ENCODE measurements at regions of chr17 and their contacts with region 1.

Region 1: DNA sequence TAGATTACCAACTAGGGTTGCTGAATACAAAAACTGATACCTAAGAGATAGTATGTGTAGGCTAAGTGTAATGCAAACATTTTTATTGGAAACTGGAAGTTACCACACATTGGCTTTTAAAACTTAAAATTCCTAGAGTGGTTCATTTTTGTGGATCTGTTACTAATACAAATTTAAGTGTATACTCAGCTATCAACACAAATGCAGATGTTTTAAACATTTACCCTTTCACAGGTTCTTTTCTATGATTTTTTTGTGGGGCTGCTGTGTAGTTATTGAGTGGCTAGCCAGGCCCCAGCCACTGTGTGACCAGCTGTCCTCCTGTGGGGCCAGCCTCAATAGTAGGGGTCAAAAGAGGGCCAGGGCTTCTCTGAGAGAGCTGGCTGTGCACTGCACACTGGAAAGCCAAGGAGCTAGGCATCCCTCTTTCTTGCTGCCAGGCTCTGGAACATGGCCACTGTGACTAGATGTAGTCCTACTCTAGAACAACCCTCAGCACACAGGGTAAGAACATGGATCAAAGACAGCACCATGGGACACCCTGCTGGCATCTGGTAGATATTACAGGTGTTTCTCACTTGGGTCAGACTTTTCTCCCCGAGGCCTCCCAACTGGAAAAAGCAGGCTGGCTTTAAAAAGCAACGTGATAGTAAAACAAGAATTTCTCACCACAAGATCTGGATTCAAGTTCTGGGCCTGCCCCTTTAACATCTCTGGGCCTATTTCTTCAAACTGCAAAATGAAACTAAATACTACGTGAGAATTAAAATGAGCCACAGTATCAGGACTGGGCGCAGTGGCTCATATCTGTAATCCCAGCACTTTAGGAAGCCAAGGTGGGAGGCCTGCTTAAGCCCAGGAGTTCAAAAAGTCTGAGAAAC is 7.3 kb upstream of the VEZF1 start:
- DNase-seq: peak; percentile 56 to 65 (median 59)
- H3K4me3 ChIP-seq: no peak overlapping the region
- H3K4me3 Mint-ChIP-seq: peak overlapping the region in 4 of 8 donors; percentile 2 to 74 (median 33)
- H3K27ac ChIP-seq: peak overlapping the region; percentile 29
- H3K27ac Mint-ChIP-seq: peak overlapping the region; percentile 59 to 88 (median 76)
- H3K4me1 ChIP-seq: peaks cover 28% of the 10 kb centered on the region
- H3K4me1 Mint-ChIP-seq: peaks cover 22 to 47% (median 36%) of the 10 kb centered on the region in 4 donors
- H3K27me3 ChIP-seq: no peaks in the 10 kb centered on the region
- H3K27me3 Mint-ChIP-seq: no peaks in the 10 kb centered on the region

Region 2: DNA sequence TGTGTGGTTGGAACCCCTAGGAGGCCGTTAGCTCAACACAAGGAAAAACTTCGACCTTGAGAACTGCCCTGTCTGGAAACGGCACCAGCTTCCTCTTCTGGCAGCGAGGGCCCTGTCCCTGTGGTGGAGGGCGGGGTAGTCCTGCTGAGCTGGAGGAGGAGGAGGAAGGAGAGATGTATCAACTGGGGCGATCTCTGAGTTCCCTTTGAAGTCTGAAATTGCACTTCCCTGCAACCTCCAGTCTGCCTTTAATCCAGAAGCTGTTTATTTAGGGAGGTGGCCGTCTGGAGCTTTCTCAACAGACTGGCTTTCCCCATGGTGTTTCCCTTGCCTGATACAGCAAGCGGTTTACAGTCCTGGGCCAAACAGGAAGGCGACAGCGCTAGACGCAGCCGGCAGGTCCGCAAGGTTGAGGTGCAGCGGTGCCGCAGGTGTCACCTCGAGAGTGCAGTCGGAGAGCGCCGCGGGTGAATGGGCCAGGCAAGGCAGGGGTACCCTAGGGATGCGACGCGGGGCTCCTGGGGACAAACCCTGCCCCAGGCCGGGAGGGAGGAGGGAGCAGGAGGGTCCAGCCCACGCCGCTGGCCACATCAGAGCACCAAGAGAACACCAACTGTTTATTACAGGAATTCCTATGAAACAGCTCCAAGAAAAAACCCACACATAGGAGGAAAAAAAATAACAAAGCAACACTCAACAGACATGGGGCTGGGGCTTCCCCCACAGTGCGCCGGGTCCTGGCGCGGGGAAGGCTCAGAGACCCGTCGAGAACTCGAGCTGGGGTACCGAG is 134.1 kb before region 1 on chr17:
- CTCF ChIA-PET with region 1: interaction called, 202 read pairs
- POLR2A ChIA-PET with region 1: interaction called, 7 read pairs
- intact Hi-C with region 1: loop called (anchors 1 kb)
- DNase-seq: peak; percentile 25 to 61 (median 32)
- H3K4me3 ChIP-seq: peak overlapping the region; percentile 52 to 66
- H3K4me3 Mint-ChIP-seq: peak overlapping the region; percentile 82 to 96 (median 86)
- H3K27ac ChIP-seq: no peak overlapping the region
- H3K27ac Mint-ChIP-seq: peak overlapping the region; percentile 13 to 75 (median 71)
- H3K4me1 ChIP-seq: peaks cover 13% of the 10 kb centered on the region
- H3K4me1 Mint-ChIP-seq: peaks cover 9 to 20% (median 14%) of the 10 kb centered on the region in 4 donors
- H3K27me3 ChIP-seq: no peaks in the 10 kb centered on the region
- H3K27me3 Mint-ChIP-seq: peaks cover 4 to 8% of the 10 kb centered on the region in 2 donors

Region 3: GRCh38 chr17:57916925-57917858 is 78.1 kb before region 1 on chr17:
- CTCF ChIA-PET with region 1: interaction called, 9 read pairs
- POLR2A ChIA-PET with region 1: interaction called, 3 read pairs
- intact Hi-C with region 1: loop called (anchors 1 kb)
- DNase-seq: peak in 4 of 5 donors; percentile 10 to 27 (median 23)
- H3K4me3 ChIP-seq: no peak overlapping the region
- H3K4me3 Mint-ChIP-seq: no peak overlapping the region
- H3K27ac ChIP-seq: no peak overlapping the region
- H3K27ac Mint-ChIP-seq: no peak overlapping the region
- H3K4me1 ChIP-seq: no peaks in the 10 kb centered on the region
- H3K4me1 Mint-ChIP-seq: no peaks in the 10 kb centered on the region
- H3K27me3 ChIP-seq: no peaks in the 10 kb centered on the region
- H3K27me3 Mint-ChIP-seq: peaks cover 2% of the 10 kb centered on the region in 2 donors

Region 4: GRCh38 chr17:57975044-57975443 is 20.3 kb before region 1 on chr17:
- CTCF ChIA-PET with region 1: interaction called, 16 read pairs
- POLR2A ChIA-PET with region 1: interaction called, 4 read pairs
- intact Hi-C with region 1: no loop called
- DNase-seq: no peak
- H3K4me3 ChIP-seq: no peak overlapping the region
- H3K4me3 Mint-ChIP-seq: no peak overlapping the region
- H3K27ac ChIP-seq: no peak overlapping the region
- H3K27ac Mint-ChIP-seq: peak overlapping the region in 1 of 7 donors; percentile 30
- H3K4me1 ChIP-seq: no peaks in the 10 kb centered on the region
- H3K4me1 Mint-ChIP-seq: peaks cover 4 to 9% (median 6%) of the 10 kb centered on the region in 4 donors
- H3K27me3 ChIP-seq: no peaks in the 10 kb centered on the region
- H3K27me3 Mint-ChIP-seq: no peaks in the 10 kb centered on the region

Region 5: GRCh38 chr17:58043221-58044181 is 48.2 kb after region 1 on chr17:
- CTCF ChIA-PET with region 1: no interaction called
- POLR2A ChIA-PET with region 1: no interaction called
- intact Hi-C with region 1: no loop called
- DNase-seq: no peak
- H3K4me3 ChIP-seq: no peak overlapping the region
- H3K4me3 Mint-ChIP-seq: no peak overlapping the region
- H3K27ac ChIP-seq: no peak overlapping the region
- H3K27ac Mint-ChIP-seq: peak overlapping the region in 1 of 7 donors; percentile 16
- H3K4me1 ChIP-seq: no peaks in the 10 kb centered on the region
- H3K4me1 Mint-ChIP-seq: no peaks in the 10 kb centered on the region
- H3K27me3 ChIP-seq: no peaks in the 10 kb centered on the region
- H3K27me3 Mint-ChIP-seq: peaks cover 13 to 33% of the 10 kb centered on the region in 2 donors

Region 6: GRCh38 chr17:58112970-58113631 is 117.8 kb after region 1 on chr17:
- CTCF ChIA-PET with region 1: interaction called, 58 read pairs
- POLR2A ChIA-PET with region 1: interaction called, 3 read pairs
- intact Hi-C with region 1: loop called (anchors 1 kb)
- DNase-seq: peak; percentile 77 to 81 (median 79)
- H3K4me3 ChIP-seq: no peak overlapping the region
- H3K4me3 Mint-ChIP-seq: no peak overlapping the region
- H3K27ac ChIP-seq: no peak overlapping the region
- H3K27ac Mint-ChIP-seq: peak overlapping the region in 2 of 7 donors; percentile 14 to 69
- H3K4me1 ChIP-seq: no peaks in the 10 kb centered on the region
- H3K4me1 Mint-ChIP-seq: peaks cover 0 to 4% (median 2%) of the 10 kb centered on the region in 4 donors
- H3K27me3 ChIP-seq: no peaks in the 10 kb centered on the region
- H3K27me3 Mint-ChIP-seq: peaks cover 3 to 8% of the 10 kb centered on the region in 2 donors

Measured in CD4-positive, alpha-beta memory T cell (primary cell).